Mammary epithelial cell (primary cell): ENCODE measurements at regions of chr2 and their contacts with region 1.

Region 1: DNA sequence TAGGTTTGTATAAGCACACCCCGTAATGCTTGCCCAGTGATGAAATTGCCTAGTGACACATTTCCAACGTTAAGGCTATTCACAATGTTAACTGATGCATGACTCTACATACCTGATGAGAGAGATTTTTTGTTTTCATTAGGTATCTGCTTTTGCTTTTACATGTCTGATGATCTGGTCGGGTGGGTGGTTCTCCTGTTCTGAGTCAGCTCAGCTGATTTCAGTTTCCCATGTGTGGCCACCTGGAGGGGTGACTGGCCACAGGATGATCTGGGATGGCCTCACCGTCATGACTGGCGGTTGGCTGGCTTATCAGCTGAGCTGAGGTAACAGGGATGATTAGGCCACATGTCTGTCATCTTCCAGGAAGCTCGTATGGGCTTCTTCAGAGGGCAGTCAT is 33.8 kb upstream of the ACYP2 start:
- DNase-seq: peak; percentile 98
- H3K4me3 ChIP-seq: no peak overlapping the region
- H3K27ac ChIP-seq: peak overlapping the region; percentile 68
- H3K4me1 ChIP-seq: peaks cover 16% of the 10 kb centered on the region
- H3K27me3 ChIP-seq: no peaks in the 10 kb centered on the region
- CTCF ChIP-seq: no peak

Region 2: GRCh38 chr2:53786705-53787612 is 294.6 kb before region 1 on chr2 and contains the starts of genes ASB3 and ERLEC1:
- CTCF ChIA-PET with region 1: no interaction called
- dilution Hi-C with region 1: no loop called
- in situ Hi-C with region 1: no loop called
- intact Hi-C with region 1: loop called (anchors 10 kb)
- DNase-seq: peak; percentile 83
- H3K4me3 ChIP-seq: peak within 1 kb of the TSS; percentile 84 to 94 (median 84)
- H3K27ac ChIP-seq: peak within 1 kb of the TSS; percentile 48
- H3K4me1 ChIP-seq: peaks cover 21% of the 10 kb centered on the region
- H3K27me3 ChIP-seq: no peaks in the 10 kb centered on the region
- CTCF ChIP-seq: peak in 1 of 2 donors; percentile 5
- total RNA-seq, gene ASB3: 18.2 to 22.0 TPM
- total RNA-seq, gene ERLEC1: 34.2 to 53.7 TPM

Region 3: DNA sequence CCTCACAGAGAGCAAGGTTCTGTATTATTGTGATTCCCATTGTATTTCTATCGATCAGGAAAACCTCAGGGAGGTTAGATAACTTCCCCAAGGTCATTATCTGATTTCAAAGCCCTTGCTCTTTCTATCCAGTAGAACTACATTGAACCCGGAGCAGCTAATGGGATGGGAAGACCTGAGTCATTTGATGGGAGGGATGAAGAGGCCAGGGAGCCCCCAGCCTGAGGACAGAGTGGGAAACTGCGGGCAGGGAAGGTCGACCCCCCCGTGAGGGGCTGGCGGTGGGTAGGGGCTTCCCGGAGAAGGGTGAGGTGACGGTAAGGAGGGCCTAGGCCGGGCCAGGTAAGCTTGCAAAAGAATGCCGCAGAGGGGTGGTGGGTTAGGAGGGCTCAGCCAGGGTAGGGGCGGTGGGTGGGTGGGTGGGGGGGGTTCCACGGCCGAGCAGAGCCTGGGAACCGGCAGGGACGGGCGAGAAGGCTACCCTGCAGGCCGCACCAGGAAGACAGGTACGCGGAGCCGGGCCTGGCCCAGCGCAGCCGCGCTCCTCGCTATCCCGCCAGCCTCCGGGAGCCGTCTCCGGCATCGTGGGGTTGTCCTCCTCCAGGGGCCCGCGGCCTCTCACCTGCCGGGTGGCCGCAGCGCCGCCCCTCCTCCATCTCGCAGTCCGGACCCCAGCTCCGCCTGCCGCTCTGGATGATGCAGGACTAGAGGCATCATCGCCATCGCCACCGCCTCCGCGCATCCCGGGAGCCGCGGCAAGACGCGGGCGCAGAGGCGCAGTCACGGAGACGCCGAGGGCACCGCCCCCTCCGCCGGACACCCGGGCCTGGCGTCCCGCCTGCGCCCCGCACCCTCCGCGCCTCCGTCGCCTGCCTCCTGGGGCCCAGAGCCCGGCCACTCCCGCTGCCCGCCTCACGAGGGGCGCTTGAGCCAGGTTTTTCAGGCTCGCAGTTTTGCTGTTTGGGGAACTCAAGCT is 222.1 kb before region 1 on chr2 and contains the start of gene GPR75:
- CTCF ChIA-PET with region 1: no interaction called
- dilution Hi-C with region 1: no loop called
- in situ Hi-C with region 1: no loop called
- intact Hi-C with region 1: loop called (anchors 10 kb)
- DNase-seq: peak; percentile 37
- H3K4me3 ChIP-seq: peak within 1 kb of the TSS in 2 of 3 experiments; percentile 30 to 54
- H3K27ac ChIP-seq: no peak within 1 kb of the TSS
- H3K4me1 ChIP-seq: peaks cover 8% of the 10 kb centered on the region
- H3K27me3 ChIP-seq: no peaks in the 10 kb centered on the region
- CTCF ChIP-seq: no peak
- total RNA-seq, gene GPR75: 4.7 to 7.8 TPM

Region 4: GRCh38 chr2:53941749-53942148 is 139.8 kb before region 1 on chr2:
- CTCF ChIA-PET with region 1: no interaction called
- dilution Hi-C with region 1: no loop called
- in situ Hi-C with region 1: no loop called
- intact Hi-C with region 1: loop called (anchors 2 kb)
- DNase-seq: no peak
- H3K4me3 ChIP-seq: no peak overlapping the region
- H3K27ac ChIP-seq: no peak overlapping the region
- H3K4me1 ChIP-seq: no peaks in the 10 kb centered on the region
- H3K27me3 ChIP-seq: no peaks in the 10 kb centered on the region
- CTCF ChIP-seq: no peak

Region 5: GRCh38 chr2:53969968-53970723 is 111.4 kb before region 1 on chr2:
- CTCF ChIA-PET with region 1: interaction called, 6 read pairs
- dilution Hi-C with region 1: no loop called
- in situ Hi-C with region 1: loop called in 1 of 2 experiments (anchors 5 kb)
- intact Hi-C with region 1: loop called (anchors 1 kb)
- DNase-seq: peak; percentile 57
- H3K4me3 ChIP-seq: peak overlapping the region; percentile 82 to 97 (median 96)
- H3K27ac ChIP-seq: peak overlapping the region; percentile 93
- H3K4me1 ChIP-seq: peaks cover 15% of the 10 kb centered on the region
- H3K27me3 ChIP-seq: no peaks in the 10 kb centered on the region
- CTCF ChIP-seq: no peak

Region 6: DNA sequence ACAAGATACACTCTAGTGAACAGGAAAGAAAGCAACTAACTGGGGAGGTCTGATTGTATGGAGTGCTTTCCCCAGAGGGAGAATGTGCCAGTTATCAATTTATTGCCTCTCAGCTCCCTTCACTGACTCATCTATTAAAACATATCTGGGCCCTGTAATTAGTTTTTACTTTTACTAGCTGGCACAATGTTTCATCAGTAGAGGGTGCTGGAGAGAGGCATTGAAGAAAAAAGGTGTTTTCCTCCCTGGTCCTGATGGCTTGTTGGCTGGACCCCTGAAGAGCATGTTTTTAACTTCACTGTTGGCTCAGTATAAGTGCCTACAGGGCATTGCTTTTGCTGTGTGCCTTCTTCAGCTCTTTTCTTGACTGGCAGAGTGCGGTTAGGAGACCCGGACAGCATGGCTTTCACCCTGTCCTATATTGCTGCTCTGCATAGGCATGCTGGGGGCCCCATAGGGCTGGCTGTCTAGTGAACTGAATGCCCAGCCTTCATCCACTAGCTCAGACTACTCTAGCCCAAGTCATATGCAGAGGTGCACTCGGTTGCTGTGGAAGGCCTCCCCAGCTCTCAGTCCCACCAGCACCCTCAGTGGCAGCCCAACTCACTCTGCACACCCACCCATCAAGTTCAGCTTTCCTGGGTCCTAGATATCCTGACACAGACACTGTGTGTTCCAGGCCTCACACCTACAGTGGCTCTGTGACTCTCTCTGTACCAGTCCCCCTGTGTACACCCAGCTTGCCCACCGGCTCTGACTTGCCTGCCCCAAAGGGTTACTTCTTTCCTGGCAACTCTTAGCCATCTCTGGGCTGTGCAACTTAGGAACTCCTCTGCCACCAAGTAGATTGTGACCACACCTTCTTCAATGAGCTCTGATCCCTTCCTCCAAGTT is 28.5 kb before region 1 on chr2:
- CTCF ChIA-PET with region 1: no interaction called
- dilution Hi-C with region 1: no loop called
- in situ Hi-C with region 1: no loop called
- intact Hi-C with region 1: loop called (anchors 1 kb)
- DNase-seq: peak; percentile 42
- H3K4me3 ChIP-seq: no peak overlapping the region
- H3K27ac ChIP-seq: no peak overlapping the region
- H3K4me1 ChIP-seq: peaks cover 8% of the 10 kb centered on the region
- H3K27me3 ChIP-seq: no peaks in the 10 kb centered on the region
- CTCF ChIP-seq: peak; percentile 36 to 45

Region 7: GRCh38 chr2:54183975-54184374 is 102.4 kb after region 1 on chr2:
- CTCF ChIA-PET with region 1: no interaction called
- dilution Hi-C with region 1: no loop called
- in situ Hi-C with region 1: no loop called
- intact Hi-C with region 1: no loop called
- DNase-seq: no peak
- H3K4me3 ChIP-seq: no peak overlapping the region
- H3K27ac ChIP-seq: no peak overlapping the region
- H3K4me1 ChIP-seq: no peaks in the 10 kb centered on the region
- H3K27me3 ChIP-seq: no peaks in the 10 kb centered on the region
- CTCF ChIP-seq: no peak